ENCODE measurements at regions of chr3 and their contacts with region 1.

Region 1: GRCh38 chr3:63874769-63875168 is 11.1 kb downstream of the ATXN7 start:
- DNase-seq: no peak
- ATAC-seq: no peak
- H3K4me3 ChIP-seq: no peak overlapping the region
- H3K4me3 Mint-ChIP-seq: no peak overlapping the region
- H3K27ac ChIP-seq: no peak overlapping the region
- H3K27ac Mint-ChIP-seq: no peak overlapping the region
- H3K4me1 ChIP-seq: peaks cover 0 to 16% of the 10 kb centered on the region in 2 donors
- H3K4me1 Mint-ChIP-seq: peaks cover 39 to 91% (median 79%) of the 10 kb centered on the region in 7 donors
- H3K27me3 ChIP-seq: no peaks in the 10 kb centered on the region
- H3K27me3 Mint-ChIP-seq: no peaks in the 10 kb centered on the region

Region 2: DNA sequence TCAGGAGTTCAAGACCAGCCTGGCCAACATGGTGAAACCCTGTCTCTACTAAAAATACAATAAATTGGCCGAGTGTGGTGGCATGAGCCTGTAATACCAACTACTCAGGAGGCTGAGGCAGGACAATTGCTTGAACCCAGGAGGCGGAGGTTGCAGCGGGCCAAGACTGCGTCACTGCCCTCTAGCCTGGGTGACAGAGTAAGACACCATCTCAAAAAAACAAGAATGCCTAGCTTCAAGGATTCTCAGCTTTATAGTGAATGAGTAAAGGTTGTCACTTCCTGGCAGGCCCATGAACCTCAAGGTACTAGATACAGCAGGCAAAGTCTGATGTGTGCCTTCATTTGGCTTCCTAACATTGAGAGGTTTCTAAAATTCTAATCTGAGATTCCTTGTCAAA is 25.6 kb before region 1 on chr3:
- CTCF ChIA-PET with region 1: no interaction called
- POLR2A ChIA-PET with region 1: no interaction called
- intact Hi-C with region 1: no loop called
- DNase-seq: no peak
- ATAC-seq: no peak
- H3K4me3 ChIP-seq: no peak overlapping the region
- H3K4me3 Mint-ChIP-seq: no peak overlapping the region
- H3K27ac ChIP-seq: no peak overlapping the region
- H3K27ac Mint-ChIP-seq: no peak overlapping the region
- H3K4me1 ChIP-seq: no peaks in the 10 kb centered on the region
- H3K4me1 Mint-ChIP-seq: peaks cover 5 to 31% (median 10%) of the 10 kb centered on the region in 7 donors
- H3K27me3 ChIP-seq: no peaks in the 10 kb centered on the region
- H3K27me3 Mint-ChIP-seq: no peaks in the 10 kb centered on the region

Region 3: GRCh38 chr3:63896332-63897030 is 21.7 kb after region 1 on chr3:
- CTCF ChIA-PET with region 1: no interaction called
- POLR2A ChIA-PET with region 1: no interaction called
- intact Hi-C with region 1: loop called in 1 of 2 experiments (anchors 2 kb)
- DNase-seq: no peak
- ATAC-seq: no peak
- H3K4me3 ChIP-seq: no peak overlapping the region
- H3K4me3 Mint-ChIP-seq: no peak overlapping the region
- H3K27ac ChIP-seq: no peak overlapping the region
- H3K27ac Mint-ChIP-seq: peak overlapping the region in 5 of 9 donors; percentile 1 to 27 (median 15)
- H3K4me1 ChIP-seq: peaks cover 0 to 4% of the 10 kb centered on the region in 2 donors
- H3K4me1 Mint-ChIP-seq: peaks cover 28 to 68% (median 54%) of the 10 kb centered on the region in 7 donors
- H3K27me3 ChIP-seq: no peaks in the 10 kb centered on the region
- H3K27me3 Mint-ChIP-seq: no peaks in the 10 kb centered on the region